CD14-positive monocyte (primary cell): ENCODE measurements at regions of chr11 and their contacts with region 1.

Region 1: GRCh38 chr11:46367244-46367915 is 14.1 kb upstream of the MDK start:
- DNase-seq: peak; percentile 50 to 68 (median 65)
- H3K4me3 ChIP-seq: no peak overlapping the region
- H3K4me3 Mint-ChIP-seq: no peak overlapping the region
- H3K27ac ChIP-seq: peak overlapping the region in 1 of 2 donors; percentile 31
- H3K27ac Mint-ChIP-seq: peak overlapping the region in 5 of 7 donors; percentile 43 to 88 (median 74)
- H3K4me1 ChIP-seq: peaks cover 22 to 39% of the 10 kb centered on the region in 2 donors
- H3K4me1 Mint-ChIP-seq: peaks cover 31% of the 10 kb centered on the region
- H3K27me3 ChIP-seq: no peaks in the 10 kb centered on the region
- H3K27me3 Mint-ChIP-seq: peaks cover 1 to 4% (median 4%) of the 10 kb centered on the region in 3 donors
- CTCF ChIP-seq: peak; percentile 89

Region 2: DNA sequence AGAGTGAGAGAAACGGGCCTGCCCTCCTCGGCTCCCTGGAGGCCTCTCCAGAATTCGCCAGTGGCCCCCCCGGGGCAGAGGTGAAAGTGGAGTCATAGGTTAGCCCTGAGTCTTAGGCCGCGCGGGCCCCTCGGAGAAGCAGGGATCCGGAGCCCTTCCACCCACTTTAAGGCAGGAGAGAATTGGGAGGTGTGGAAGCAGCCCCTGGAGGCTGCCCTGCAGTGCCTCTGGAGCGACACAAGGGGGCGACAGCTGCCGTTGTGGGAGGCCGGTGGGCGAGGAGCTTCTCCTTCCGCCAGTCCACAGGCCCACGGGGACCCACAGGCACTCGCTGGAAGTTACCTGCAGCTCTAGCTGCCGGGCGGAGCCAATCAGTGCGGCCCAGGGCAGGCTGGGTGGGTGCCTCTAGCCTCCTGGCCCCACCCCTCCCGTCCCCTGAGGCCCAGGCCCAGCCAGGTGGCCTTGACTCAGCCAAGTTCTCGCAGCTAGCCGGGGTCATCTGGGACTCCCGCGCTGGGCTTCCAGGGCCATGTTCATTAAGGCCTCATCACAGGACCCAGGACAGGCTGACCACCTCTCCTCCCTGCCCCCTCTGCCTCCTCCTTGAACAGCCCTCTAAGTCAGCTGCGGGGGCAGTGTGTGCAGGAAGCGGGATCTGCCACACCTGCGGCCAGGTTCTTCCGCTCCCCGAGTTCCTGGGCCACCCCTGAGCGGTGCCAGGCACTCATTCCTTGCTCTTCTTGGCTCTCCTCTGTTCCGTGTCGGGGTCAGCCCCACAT is 15.1 kb before region 1 on chr11:
- intact Hi-C with region 1: loop called in 1 of 2 experiments (anchors 2 kb)
- DNase-seq: peak; percentile 46 to 62 (median 58)
- H3K4me3 ChIP-seq: no peak overlapping the region
- H3K4me3 Mint-ChIP-seq: no peak overlapping the region
- H3K27ac ChIP-seq: peak overlapping the region; percentile 22 to 70
- H3K27ac Mint-ChIP-seq: peak overlapping the region; percentile 63 to 92 (median 79)
- H3K4me1 ChIP-seq: peaks cover 75 to 91% of the 10 kb centered on the region in 2 donors
- H3K4me1 Mint-ChIP-seq: peaks cover 85% of the 10 kb centered on the region
- H3K27me3 ChIP-seq: no peaks in the 10 kb centered on the region
- H3K27me3 Mint-ChIP-seq: no peaks in the 10 kb centered on the region
- CTCF ChIP-seq: peak; percentile 99

Region 3: GRCh38 chr11:46537537-46538295 is 170.3 kb after region 1 on chr11:
- intact Hi-C with region 1: loop called in 1 of 2 experiments (anchors 5 kb)
- DNase-seq: peak; percentile 44 to 55 (median 54)
- H3K4me3 ChIP-seq: no peak overlapping the region
- H3K4me3 Mint-ChIP-seq: no peak overlapping the region
- H3K27ac ChIP-seq: no peak overlapping the region
- H3K27ac Mint-ChIP-seq: peak overlapping the region in 1 of 7 donors; percentile 22
- H3K4me1 ChIP-seq: peaks cover 5 to 6% of the 10 kb centered on the region in 2 donors
- H3K4me1 Mint-ChIP-seq: peaks cover 19% of the 10 kb centered on the region
- H3K27me3 ChIP-seq: no peaks in the 10 kb centered on the region
- H3K27me3 Mint-ChIP-seq: peaks cover 0 to 5% (median 1%) of the 10 kb centered on the region in 3 donors
- CTCF ChIP-seq: peak; percentile 89